CD4-positive, alpha-beta T cell (primary cell): ENCODE measurements at regions of chr19 and their contacts with region 1.

Region 1: DNA sequence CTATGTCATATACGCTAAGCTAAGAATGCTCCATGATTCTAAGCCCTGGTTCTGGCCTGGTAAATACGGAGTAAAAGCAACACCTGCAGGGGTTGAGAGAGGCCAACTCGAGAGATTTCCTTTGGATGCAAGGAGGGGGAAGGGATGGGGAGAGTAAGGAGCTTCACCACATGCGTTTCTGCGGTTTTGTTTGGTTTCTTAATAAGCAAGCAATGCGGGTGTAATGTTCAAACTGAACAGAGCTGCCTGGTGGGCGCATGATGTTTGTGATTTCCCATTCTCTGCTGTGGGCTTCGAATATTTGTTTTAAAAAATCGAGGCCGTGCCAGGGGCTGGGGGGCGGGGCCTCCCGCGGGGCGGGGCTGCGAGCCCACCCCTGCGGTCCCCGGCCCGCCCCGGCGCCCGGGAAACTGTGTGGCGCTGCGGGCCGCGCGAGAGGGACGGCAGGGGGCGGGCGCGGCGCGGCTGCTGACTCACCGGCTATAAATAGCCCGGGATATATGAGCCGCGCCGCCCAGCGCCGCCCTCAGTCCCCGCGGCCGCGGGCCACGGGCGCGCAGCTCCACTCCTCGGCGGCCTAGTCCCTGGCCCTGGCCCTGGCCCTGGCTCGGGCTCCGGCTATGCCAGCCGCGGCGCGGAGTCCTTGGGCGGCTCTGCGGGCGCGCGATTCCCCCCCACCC is 5.1 kb downstream of the BBC3 start:
- DNase-seq: peak; percentile 79 to 95 (median 86)
- ATAC-seq: peak; percentile 54
- H3K4me3 ChIP-seq: peak overlapping the region; percentile 56
- H3K4me3 Mint-ChIP-seq: peak overlapping the region; percentile 72
- H3K27ac ChIP-seq: peak overlapping the region in 1 of 2 donors; percentile 85
- H3K27ac Mint-ChIP-seq: peak overlapping the region; percentile 85
- H3K4me1 ChIP-seq: peaks cover 48% of the 10 kb centered on the region
- H3K4me1 Mint-ChIP-seq: peaks cover 15% of the 10 kb centered on the region
- H3K27me3 ChIP-seq: no peaks in the 10 kb centered on the region
- H3K27me3 Mint-ChIP-seq: no peaks in the 10 kb centered on the region
- CTCF ChIP-seq: no peak

Region 2: GRCh38 chr19:47143322-47144073 is 82.4 kb before region 1 on chr19:
- CTCF ChIA-PET with region 1: no interaction called
- POLR2A ChIA-PET with region 1: interaction called, 6 read pairs
- intact Hi-C with region 1: loop called in 1 of 2 experiments (anchors 5 kb)
- DNase-seq: no peak
- ATAC-seq: no peak
- H3K4me3 ChIP-seq: no peak overlapping the region
- H3K4me3 Mint-ChIP-seq: no peak overlapping the region
- H3K27ac ChIP-seq: no peak overlapping the region
- H3K27ac Mint-ChIP-seq: no peak overlapping the region
- H3K4me1 ChIP-seq: peaks cover 42% of the 10 kb centered on the region
- H3K4me1 Mint-ChIP-seq: peaks cover 56% of the 10 kb centered on the region
- H3K27me3 ChIP-seq: no peaks in the 10 kb centered on the region
- H3K27me3 Mint-ChIP-seq: no peaks in the 10 kb centered on the region
- CTCF ChIP-seq: no peak

Region 3: DNA sequence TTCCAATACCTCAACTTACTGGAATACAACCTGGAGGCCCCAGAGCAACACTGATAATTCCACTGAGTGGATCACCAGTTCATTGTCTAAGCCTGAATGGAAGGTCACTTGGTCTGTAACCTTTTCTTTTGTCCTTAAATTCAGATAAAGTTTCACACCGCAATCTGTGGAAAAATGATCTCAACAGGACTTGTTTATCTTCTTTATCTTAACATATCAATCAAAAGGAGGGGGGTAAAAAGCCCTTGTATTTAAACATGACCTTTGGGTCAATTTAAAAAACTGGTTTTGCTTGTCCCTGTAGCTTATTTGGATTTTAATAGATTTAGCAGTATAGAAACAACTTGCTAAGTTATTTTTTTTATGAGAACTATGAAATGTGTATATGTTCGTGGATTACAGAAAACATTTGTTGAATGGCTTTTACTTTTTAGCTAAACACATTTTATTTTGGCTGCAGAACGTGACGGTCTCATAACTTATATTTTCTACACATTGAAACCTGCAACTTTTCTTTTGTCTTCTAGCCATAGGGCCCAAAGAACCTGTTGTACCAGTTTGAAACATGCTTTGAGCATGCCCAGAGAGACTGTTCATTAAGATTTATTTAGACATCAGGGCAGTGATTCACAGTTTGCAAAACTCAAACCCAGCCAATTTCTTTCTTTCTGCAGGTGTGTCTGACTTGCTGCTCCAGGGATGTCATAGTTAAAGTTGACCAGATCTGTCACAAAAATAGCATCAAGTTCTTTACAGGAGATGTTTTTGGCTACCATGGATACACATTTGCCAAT is 73.5 kb before region 1 on chr19:
- CTCF ChIA-PET with region 1: no interaction called
- POLR2A ChIA-PET with region 1: interaction called, 35 read pairs
- intact Hi-C with region 1: loop called in 1 of 2 experiments (anchors 5 kb)
- DNase-seq: no peak
- ATAC-seq: no peak
- H3K4me3 ChIP-seq: no peak overlapping the region
- H3K4me3 Mint-ChIP-seq: no peak overlapping the region
- H3K27ac ChIP-seq: no peak overlapping the region
- H3K27ac Mint-ChIP-seq: peak overlapping the region; percentile 27
- H3K4me1 ChIP-seq: peaks cover 49% of the 10 kb centered on the region
- H3K4me1 Mint-ChIP-seq: peaks cover 51% of the 10 kb centered on the region
- H3K27me3 ChIP-seq: no peaks in the 10 kb centered on the region
- H3K27me3 Mint-ChIP-seq: no peaks in the 10 kb centered on the region
- CTCF ChIP-seq: no peak

Region 4: GRCh38 chr19:47157431-47158321 is 68.2 kb before region 1 on chr19:
- CTCF ChIA-PET with region 1: interaction called, 12 read pairs
- POLR2A ChIA-PET with region 1: interaction called, 35 read pairs
- intact Hi-C with region 1: no loop called
- DNase-seq: peak in 12 of 14 experiments; percentile 21 to 84 (median 42)
- ATAC-seq: peak; percentile 15
- H3K4me3 ChIP-seq: peak overlapping the region; percentile 31
- H3K4me3 Mint-ChIP-seq: peak overlapping the region; percentile 81
- H3K27ac ChIP-seq: peak overlapping the region; percentile 42 to 64
- H3K27ac Mint-ChIP-seq: peak overlapping the region; percentile 85
- H3K4me1 ChIP-seq: peaks cover 73% of the 10 kb centered on the region
- H3K4me1 Mint-ChIP-seq: peaks cover 71% of the 10 kb centered on the region
- H3K27me3 ChIP-seq: no peaks in the 10 kb centered on the region
- H3K27me3 Mint-ChIP-seq: no peaks in the 10 kb centered on the region
- CTCF ChIP-seq: no peak

Region 5: GRCh38 chr19:47176627-47177090 is 49.2 kb before region 1 on chr19:
- CTCF ChIA-PET with region 1: interaction called, 3 read pairs
- POLR2A ChIA-PET with region 1: interaction called, 26 read pairs
- intact Hi-C with region 1: no loop called
- DNase-seq: peak in 11 of 14 experiments; percentile 22 to 82 (median 43)
- ATAC-seq: peak; percentile 85
- H3K4me3 ChIP-seq: peak overlapping the region; percentile 6
- H3K4me3 Mint-ChIP-seq: peak overlapping the region; percentile 81
- H3K27ac ChIP-seq: peak overlapping the region; percentile 60 to 68
- H3K27ac Mint-ChIP-seq: peak overlapping the region; percentile 98
- H3K4me1 ChIP-seq: peaks cover 56% of the 10 kb centered on the region
- H3K4me1 Mint-ChIP-seq: peaks cover 69% of the 10 kb centered on the region
- H3K27me3 ChIP-seq: no peaks in the 10 kb centered on the region
- H3K27me3 Mint-ChIP-seq: no peaks in the 10 kb centered on the region
- CTCF ChIP-seq: no peak

Region 6: DNA sequence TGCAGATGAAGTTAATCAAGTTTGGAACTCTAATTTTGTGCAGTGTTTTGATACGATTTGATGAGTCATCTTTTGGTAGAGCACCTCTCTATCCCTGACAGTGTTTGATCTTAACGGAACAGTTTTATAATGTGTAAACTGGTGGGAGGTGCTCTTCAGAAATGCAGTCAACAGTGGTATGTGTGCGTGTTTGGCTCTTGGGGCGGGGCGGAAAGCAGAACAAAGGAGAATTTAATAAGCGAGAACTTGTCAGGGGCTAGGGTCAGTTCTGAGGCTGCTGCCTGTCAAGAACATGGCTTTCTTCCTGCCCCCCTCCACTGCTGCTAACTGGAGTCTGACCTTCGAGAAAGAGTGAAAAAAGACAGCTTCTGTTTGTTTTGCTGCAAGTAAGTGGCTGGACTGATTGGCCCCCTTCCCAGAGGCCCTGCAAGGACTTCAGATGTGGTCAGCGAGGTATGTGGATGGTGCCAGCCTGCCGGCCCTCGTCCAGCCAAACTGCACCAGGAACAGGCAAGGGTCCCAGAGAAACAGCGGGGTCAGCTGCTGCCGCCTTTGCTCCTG is 35.6 kb before region 1 on chr19:
- CTCF ChIA-PET with region 1: interaction called, 13 read pairs
- POLR2A ChIA-PET with region 1: interaction called, 27 read pairs
- intact Hi-C with region 1: loop called in 1 of 2 experiments (anchors 2 kb)
- DNase-seq: peak; percentile 34 to 80 (median 64)
- ATAC-seq: peak; percentile 53
- H3K4me3 ChIP-seq: no peak overlapping the region
- H3K4me3 Mint-ChIP-seq: peak overlapping the region; percentile 49
- H3K27ac ChIP-seq: peak overlapping the region; percentile 0 to 36
- H3K27ac Mint-ChIP-seq: peak overlapping the region; percentile 90
- H3K4me1 ChIP-seq: peaks cover 82% of the 10 kb centered on the region
- H3K4me1 Mint-ChIP-seq: peaks cover 58% of the 10 kb centered on the region
- H3K27me3 ChIP-seq: no peaks in the 10 kb centered on the region
- H3K27me3 Mint-ChIP-seq: no peaks in the 10 kb centered on the region
- CTCF ChIP-seq: no peak

Region 7: GRCh38 chr19:47273313-47273977 is 47.6 kb after region 1 on chr19:
- CTCF ChIA-PET with region 1: no interaction called
- POLR2A ChIA-PET with region 1: interaction called, 32 read pairs
- intact Hi-C with region 1: loop called in 1 of 2 experiments (anchors 1 kb)
- DNase-seq: peak; percentile 82 to 95 (median 88)
- ATAC-seq: peak; percentile 63
- H3K4me3 ChIP-seq: peak overlapping the region; percentile 100
- H3K4me3 Mint-ChIP-seq: peak overlapping the region; percentile 100
- H3K27ac ChIP-seq: peak overlapping the region; percentile 92 to 99
- H3K27ac Mint-ChIP-seq: peak overlapping the region; percentile 99
- H3K4me1 ChIP-seq: peaks cover 24% of the 10 kb centered on the region
- H3K4me1 Mint-ChIP-seq: peaks cover 28% of the 10 kb centered on the region
- H3K27me3 ChIP-seq: no peaks in the 10 kb centered on the region
- H3K27me3 Mint-ChIP-seq: no peaks in the 10 kb centered on the region
- CTCF ChIP-seq: no peak